Ascending aorta (tissue), 2 donors: ENCODE measurements at regions of chr6 and their contacts with region 1.

Region 1: DNA sequence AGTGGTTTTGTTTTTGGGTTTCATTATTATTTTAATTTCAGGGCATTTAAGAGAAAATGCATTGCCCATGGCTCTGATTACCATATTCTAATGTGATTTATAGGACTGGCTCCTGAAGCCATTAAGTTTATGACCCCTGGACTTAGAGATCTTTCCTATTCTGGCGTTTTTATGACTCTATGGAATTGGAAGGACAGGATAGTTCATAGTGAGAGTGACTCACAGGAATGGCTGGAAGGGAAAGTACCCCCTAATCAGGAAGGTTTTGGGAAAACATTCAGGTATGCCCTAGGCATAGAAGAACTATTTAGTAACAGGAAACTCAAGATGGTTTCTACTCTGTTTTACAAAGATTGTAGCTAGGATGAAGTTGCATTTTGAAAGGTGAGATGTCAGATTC is 108.6 kb upstream of the SLC2A12 start:
- DNase-seq: no peak
- H3K4me3 ChIP-seq: no peak overlapping the region
- H3K27ac ChIP-seq: no peak overlapping the region
- H3K4me1 ChIP-seq: no peaks in the 10 kb centered on the region
- H3K27me3 ChIP-seq: no peaks in the 10 kb centered on the region
- CTCF ChIP-seq: no peak

Region 2: GRCh38 chr6:134196568-134197193 is 35.6 kb after region 1 on chr6:
- intact Hi-C with region 1: no loop called
- DNase-seq: no peak
- H3K4me3 ChIP-seq: no peak overlapping the region
- H3K27ac ChIP-seq: no peak overlapping the region
- H3K4me1 ChIP-seq: peaks cover 0 to 5% of the 10 kb centered on the region in 2 donors
- H3K27me3 ChIP-seq: no peaks in the 10 kb centered on the region
- CTCF ChIP-seq: no peak

Region 3: GRCh38 chr6:134822920-134823709 is 662.1 kb after region 1 on chr6:
- intact Hi-C with region 1: loop called (anchors 2 kb)
- DNase-seq: no peak
- H3K4me3 ChIP-seq: no peak overlapping the region
- H3K27ac ChIP-seq: no peak overlapping the region
- H3K4me1 ChIP-seq: peaks cover 0 to 6% of the 10 kb centered on the region in 2 donors
- H3K27me3 ChIP-seq: no peaks in the 10 kb centered on the region
- CTCF ChIP-seq: peak; percentile 80 to 82 (median 82)

Region 4: DNA sequence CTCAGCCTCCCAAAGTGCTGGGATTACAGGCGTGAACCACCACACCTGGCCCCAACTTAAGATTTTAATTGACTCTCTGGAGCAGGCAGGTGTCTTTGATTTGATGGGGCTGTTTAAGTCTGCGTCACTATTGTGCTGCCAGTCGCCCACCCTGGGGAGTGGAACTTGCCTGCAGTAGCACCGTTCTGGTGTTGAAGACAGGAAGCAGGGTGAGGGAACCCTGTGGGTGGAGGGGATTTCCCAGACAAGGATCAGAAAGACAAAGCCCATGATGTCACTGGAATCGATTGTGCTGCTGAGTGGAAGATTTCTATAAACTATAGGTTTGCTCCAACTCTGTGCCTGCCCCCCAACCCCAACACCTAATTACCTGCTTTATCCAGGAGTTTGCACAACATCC is 777.9 kb after region 1 on chr6:
- intact Hi-C with region 1: loop called (anchors 1 kb)
- DNase-seq: no peak
- H3K4me3 ChIP-seq: no peak overlapping the region
- H3K27ac ChIP-seq: no peak overlapping the region
- H3K4me1 ChIP-seq: no peaks in the 10 kb centered on the region
- H3K27me3 ChIP-seq: no peaks in the 10 kb centered on the region
- CTCF ChIP-seq: no peak